Panc1 (cell line): ENCODE measurements at regions of chr1 and their contacts with region 1.

Region 1: DNA sequence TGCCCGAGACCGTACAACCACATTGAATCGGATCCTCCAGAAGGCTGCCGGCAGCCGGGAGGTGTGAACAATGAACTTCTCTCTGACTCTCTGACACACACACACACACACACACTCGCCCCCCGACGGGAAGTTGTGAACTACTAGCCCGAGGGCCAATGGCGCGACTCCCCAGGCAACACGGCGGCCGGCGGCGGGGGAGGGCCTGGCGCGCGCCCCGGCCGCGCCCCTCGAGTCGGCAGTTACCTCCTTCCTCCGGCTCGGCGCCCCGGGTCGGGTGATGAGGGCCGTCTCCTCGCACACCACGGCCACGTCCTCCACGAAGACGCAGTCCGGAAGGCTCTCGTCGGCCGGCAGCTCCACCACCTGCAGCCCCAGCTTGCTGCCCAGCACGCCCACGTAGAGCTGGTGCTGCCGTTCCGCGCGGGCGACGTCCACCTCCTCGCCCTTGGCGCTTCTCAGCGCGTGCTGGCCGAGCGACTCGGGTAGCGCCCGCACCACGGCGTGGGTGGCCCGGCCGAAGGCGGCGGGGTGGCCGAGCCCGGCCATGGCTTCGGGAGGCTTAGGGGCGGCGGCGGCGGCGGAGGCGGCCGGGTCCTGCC is 361 bp downstream of the DDAH1 start:
- DNase-seq: no peak
- ATAC-seq: peak; percentile 86
- H3K4me3 ChIP-seq: peak overlapping the region; percentile 80 to 82
- H3K27ac ChIP-seq: peak overlapping the region; percentile 94
- H3K4me1 ChIP-seq: peaks cover 48% of the 10 kb centered on the region
- H3K27me3 ChIP-seq: no peaks in the 10 kb centered on the region
- CTCF ChIP-seq: 0 out of 2 replicates have a peak, but pooled peaks have one; percentile 5

Region 2: DNA sequence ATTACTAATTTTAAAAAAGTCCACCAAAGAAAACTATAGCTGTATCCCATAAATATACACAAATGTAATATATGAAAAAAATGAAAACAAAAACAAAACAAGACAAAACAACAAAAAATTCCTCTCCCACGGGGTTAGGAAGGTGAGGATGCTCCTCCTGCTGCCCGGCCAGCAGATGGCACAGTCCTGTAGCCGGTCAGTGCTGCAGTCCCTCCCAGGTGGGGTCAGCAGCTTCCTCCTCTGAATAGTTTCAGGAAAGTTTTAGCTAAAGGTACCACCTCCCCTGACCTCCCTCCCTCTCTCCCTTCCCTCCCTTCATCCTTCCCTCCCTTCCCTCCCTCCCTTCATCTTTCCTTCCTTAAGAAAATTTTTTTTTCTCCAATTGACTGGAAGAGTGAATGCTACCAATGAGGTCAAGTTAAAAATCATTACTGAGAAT is 120.3 kb before region 1 on chr1:
- CTCF ChIA-PET with region 1: interaction called, 4 read pairs
- POLR2A ChIA-PET with region 1: interaction called, 4 read pairs
- in situ Hi-C with region 1: no loop called
- intact Hi-C with region 1: loop called (anchors 5 kb)
- DNase-seq: no peak
- ATAC-seq: peak; percentile 94
- H3K4me3 ChIP-seq: no peak overlapping the region
- H3K27ac ChIP-seq: peak overlapping the region; percentile 90
- H3K4me1 ChIP-seq: peaks cover 49% of the 10 kb centered on the region
- H3K27me3 ChIP-seq: no peaks in the 10 kb centered on the region
- CTCF ChIP-seq: peak; percentile 99

Region 3: GRCh38 chr1:85406887-85407533 is 57.6 kb before region 1 on chr1:
- CTCF ChIA-PET with region 1: no interaction called
- POLR2A ChIA-PET with region 1: no interaction called
- in situ Hi-C with region 1: no loop called
- intact Hi-C with region 1: no loop called
- DNase-seq: peak; percentile 76
- ATAC-seq: peak; percentile 90
- H3K4me3 ChIP-seq: peak overlapping the region in 1 of 2 experiments; percentile 23; a peak in 2 of 4 replicates
- H3K27ac ChIP-seq: peak overlapping the region; percentile 81
- H3K4me1 ChIP-seq: peaks cover 49% of the 10 kb centered on the region
- H3K27me3 ChIP-seq: no peaks in the 10 kb centered on the region
- CTCF ChIP-seq: no peak